ENCODE measurements at regions of chr15 and their contacts with region 1.

Region 1: GRCh38 chr15:90013503-90013937 is 12.4 kb downstream of the ZNF710 start:
- DNase-seq: peak; percentile 85
- H3K4me3 Mint-ChIP-seq: peak overlapping the region; percentile 59
- H3K27ac Mint-ChIP-seq: peak overlapping the region; percentile 66
- H3K4me1 Mint-ChIP-seq: peaks cover 41% of the 10 kb centered on the region
- H3K27me3 Mint-ChIP-seq: no peaks in the 10 kb centered on the region

Region 2: GRCh38 chr15:90037961-90038631 is 24.6 kb after region 1 on chr15:
- intact Hi-C with region 1: loop called (anchors 1 kb)
- DNase-seq: peak; percentile 80
- H3K4me3 Mint-ChIP-seq: peak overlapping the region; percentile 48
- H3K27ac Mint-ChIP-seq: peak overlapping the region; percentile 79
- H3K4me1 Mint-ChIP-seq: peaks cover 65% of the 10 kb centered on the region
- H3K27me3 Mint-ChIP-seq: no peaks in the 10 kb centered on the region

Region 3: DNA sequence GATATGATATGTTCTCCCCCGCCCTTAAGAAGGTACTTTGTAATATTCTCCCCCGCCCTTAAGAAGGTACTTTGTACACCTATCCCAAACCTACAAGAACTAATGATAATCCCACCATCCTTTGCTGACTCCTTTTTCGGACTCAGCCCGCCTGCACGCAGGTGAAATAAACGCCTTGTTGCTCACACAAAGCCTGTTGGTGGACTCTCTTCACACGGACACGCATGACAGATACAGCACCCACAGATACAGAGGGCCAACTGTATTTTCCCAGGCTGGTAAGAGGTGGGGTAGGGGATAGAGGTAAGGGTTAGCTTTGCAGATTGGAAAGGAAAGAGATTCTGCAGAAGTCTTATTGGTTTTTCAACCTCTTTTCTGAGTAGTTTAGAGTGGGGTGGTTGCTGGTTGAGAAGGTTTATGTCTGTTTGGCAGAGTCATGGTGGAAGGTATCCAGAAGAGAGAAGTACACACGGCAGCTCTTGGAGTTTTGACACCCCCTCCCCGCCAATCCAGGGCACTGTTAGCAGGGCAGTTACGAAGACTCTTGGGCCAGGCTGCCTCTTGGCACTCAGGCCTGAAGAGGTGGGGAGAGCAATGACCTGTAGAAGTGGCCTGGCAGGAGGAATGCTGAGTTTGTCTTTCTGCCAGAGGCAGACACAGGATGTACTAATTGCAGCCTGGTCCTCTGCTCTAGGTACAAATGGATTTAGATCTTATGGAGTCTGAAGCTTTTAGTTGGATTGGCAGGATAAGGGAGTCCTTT is 124.7 kb after region 1 on chr15:
- intact Hi-C with region 1: no loop called
- DNase-seq: no peak
- H3K4me3 Mint-ChIP-seq: no peak overlapping the region
- H3K27ac Mint-ChIP-seq: no peak overlapping the region
- H3K4me1 Mint-ChIP-seq: peaks cover 26% of the 10 kb centered on the region
- H3K27me3 Mint-ChIP-seq: peaks cover 16% of the 10 kb centered on the region

Measured in activated CD4-positive, alpha-beta T cell treated with anti-CD3 and anti-CD28 coated beads, Interleukin-2, amount 10 ng/mL, durations not matched to agents 24 days and 14 days (primary cell).